ENCODE measurements at regions of chr9 and their contacts with region 1.

Region 1: DNA sequence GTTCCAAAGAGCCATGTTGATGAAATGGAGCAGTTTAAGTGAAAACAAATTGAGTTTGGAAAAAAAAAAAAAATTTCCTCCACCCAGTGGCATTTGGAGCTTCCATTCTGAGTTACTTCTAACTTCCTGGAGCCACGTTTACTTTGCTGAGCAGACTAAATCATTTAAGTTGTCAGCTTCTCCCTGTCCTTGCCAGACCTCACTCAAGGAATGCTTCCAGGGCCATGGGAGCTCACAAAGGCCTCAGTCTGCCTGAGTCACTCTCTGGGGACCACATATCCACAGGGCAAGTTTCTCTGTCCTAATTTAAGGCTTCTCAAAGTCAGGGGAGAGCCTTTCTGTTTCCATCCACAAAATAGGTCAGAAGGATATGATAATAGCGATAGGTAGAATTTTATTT is 210.3 kb upstream of the TNC start:
- DNase-seq: no peak
- ATAC-seq: peak in 2 of 4 donors; percentile 27 to 32
- H3K4me3 ChIP-seq: no peak overlapping the region
- H3K27ac ChIP-seq: no peak overlapping the region
- H3K4me1 ChIP-seq: no peaks in the 10 kb centered on the region
- H3K27me3 ChIP-seq: no peaks in the 10 kb centered on the region
- CTCF ChIP-seq: no peak

Region 2: DNA sequence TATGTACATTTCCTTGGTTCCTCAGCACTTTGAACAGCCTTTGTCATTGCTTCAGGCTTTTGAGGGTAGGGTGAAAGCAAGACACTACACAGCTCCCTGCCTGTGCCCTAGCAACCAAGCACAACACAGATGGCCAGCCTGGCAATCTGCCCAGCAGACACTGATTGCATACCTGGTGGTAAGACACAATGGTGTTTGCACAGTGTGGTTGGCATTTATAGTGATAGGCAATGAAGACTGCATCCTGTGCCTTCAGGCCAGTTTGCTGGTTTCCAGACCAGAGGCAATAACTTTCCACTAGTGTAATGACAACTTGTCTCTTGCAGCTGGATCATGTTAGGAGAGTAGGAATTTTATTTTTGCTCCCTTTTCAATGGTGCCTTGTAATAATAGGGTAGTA is 65.8 kb before region 1 on chr9:
- intact Hi-C with region 1: loop called in 1 of 3 experiments (anchors 10 kb)
- DNase-seq: peak; percentile 47 to 85 (median 70)
- ATAC-seq: peak; percentile 48 to 96 (median 94)
- H3K4me3 ChIP-seq: no peak overlapping the region
- H3K27ac ChIP-seq: no peak overlapping the region
- H3K4me1 ChIP-seq: no peaks in the 10 kb centered on the region
- H3K27me3 ChIP-seq: no peaks in the 10 kb centered on the region
- CTCF ChIP-seq: no peak

Region 3: DNA sequence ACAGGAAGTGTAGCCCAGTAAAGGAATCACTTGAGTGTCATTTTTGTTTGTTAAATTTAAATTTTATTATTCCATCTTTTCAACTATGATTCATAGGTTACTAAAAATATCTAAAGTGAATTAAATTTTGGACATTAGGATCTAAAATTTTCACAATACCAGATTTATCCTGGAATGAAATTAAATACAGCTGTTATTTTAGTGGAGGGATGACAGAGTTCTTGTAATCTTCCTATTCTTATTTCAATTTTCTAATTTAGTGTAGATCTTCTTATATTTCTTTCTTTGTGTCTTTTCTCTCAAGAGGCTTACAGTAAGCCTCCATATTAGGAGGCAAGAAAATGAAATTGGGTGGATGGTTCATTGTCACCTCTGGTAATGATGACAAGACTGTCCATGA is 42.4 kb before region 1 on chr9:
- intact Hi-C with region 1: no loop called
- DNase-seq: no peak
- ATAC-seq: no peak
- H3K4me3 ChIP-seq: no peak overlapping the region
- H3K27ac ChIP-seq: no peak overlapping the region
- H3K4me1 ChIP-seq: no peaks in the 10 kb centered on the region
- H3K27me3 ChIP-seq: no peaks in the 10 kb centered on the region
- CTCF ChIP-seq: no peak

Region 4: GRCh38 chr9:115416299-115416698 is 88.1 kb after region 1 on chr9:
- intact Hi-C with region 1: no loop called
- DNase-seq: no peak
- ATAC-seq: no peak
- H3K4me3 ChIP-seq: no peak overlapping the region
- H3K27ac ChIP-seq: no peak overlapping the region
- H3K4me1 ChIP-seq: no peaks in the 10 kb centered on the region
- H3K27me3 ChIP-seq: no peaks in the 10 kb centered on the region
- CTCF ChIP-seq: no peak

Measured in pancreas (tissue), 10 donors.